Naive thymus-derived CD4-positive, alpha-beta T cell (primary cell): ENCODE measurements at regions of chr7 and their contacts with region 1.

Region 1: GRCh38 chr7:144786522-144786921 is 49.3 kb downstream of the TPK1 start:
- DNase-seq: peak in 1 of 9 donors; percentile 15
- ATAC-seq: peak; percentile 50
- H3K4me3 ChIP-seq: no peak overlapping the region
- H3K4me3 Mint-ChIP-seq: no peak overlapping the region
- H3K27ac ChIP-seq: no peak overlapping the region
- H3K27ac Mint-ChIP-seq: peak overlapping the region in 3 of 9 donors; percentile 12 to 40 (median 28)
- H3K4me1 ChIP-seq: no peaks in the 10 kb centered on the region
- H3K4me1 Mint-ChIP-seq: peaks cover 6 to 42% (median 24%) of the 10 kb centered on the region in 7 donors
- H3K27me3 ChIP-seq: no peaks in the 10 kb centered on the region
- H3K27me3 Mint-ChIP-seq: no peaks in the 10 kb centered on the region

Region 2: DNA sequence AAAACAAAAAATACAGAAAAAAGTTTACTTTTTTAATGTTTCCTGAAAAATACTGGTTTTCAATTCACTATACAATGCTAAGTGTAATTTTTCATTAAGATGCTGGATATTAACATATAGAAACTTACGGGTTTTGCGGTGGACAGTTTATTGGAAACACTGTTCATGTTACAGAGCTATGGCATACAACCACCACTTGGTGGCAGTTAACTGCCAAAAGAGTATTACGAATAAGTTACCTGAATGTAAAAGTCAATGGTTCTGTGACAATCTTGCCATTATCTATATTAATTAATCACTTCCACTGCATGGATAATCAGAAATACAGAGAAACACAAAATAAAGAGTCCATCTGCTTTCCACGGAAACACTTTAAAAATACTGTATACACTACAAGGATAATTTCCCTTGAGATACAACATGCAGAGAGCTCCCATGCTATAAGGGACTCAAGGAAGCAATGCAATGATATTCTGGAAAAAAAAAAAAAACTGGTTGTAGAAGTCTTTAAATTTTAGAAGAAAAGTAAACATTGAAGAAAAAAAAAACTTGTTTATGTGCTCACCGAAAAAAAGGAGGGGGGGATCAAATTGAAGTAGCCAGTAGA is 47.7 kb before region 1 on chr7:
- CTCF ChIA-PET with region 1: interaction called, 3 read pairs
- POLR2A ChIA-PET with region 1: no interaction called
- intact Hi-C with region 1: loop called (anchors 1 to 2 kb)
- DNase-seq: peak in 7 of 9 donors; percentile 9 to 55 (median 43)
- ATAC-seq: peak; percentile 67
- H3K4me3 ChIP-seq: no peak overlapping the region
- H3K4me3 Mint-ChIP-seq: no peak overlapping the region
- H3K27ac ChIP-seq: no peak overlapping the region
- H3K27ac Mint-ChIP-seq: no peak overlapping the region
- H3K4me1 ChIP-seq: no peaks in the 10 kb centered on the region
- H3K4me1 Mint-ChIP-seq: peaks cover 0 to 15% (median 11%) of the 10 kb centered on the region in 7 donors
- H3K27me3 ChIP-seq: no peaks in the 10 kb centered on the region
- H3K27me3 Mint-ChIP-seq: no peaks in the 10 kb centered on the region

Region 3: DNA sequence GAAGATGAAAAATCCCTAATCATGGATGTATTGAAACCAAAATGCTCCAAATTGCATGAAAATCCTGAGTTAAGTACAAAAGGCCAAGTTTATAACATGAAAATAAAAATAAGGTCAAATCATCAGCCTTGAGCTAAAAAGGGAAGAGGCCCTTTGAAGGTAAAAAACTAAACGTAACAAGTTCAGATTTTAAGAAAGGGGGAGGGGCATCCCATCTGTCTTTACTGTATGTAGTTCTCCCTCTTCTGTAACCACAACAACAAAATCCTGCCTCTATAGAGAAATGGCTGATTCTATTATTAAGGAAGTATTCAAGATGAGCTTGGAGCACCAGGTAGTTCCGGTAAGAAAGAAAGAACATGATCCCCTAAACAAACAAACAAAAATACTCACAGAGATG is 15.3 kb before region 1 on chr7:
- CTCF ChIA-PET with region 1: no interaction called
- POLR2A ChIA-PET with region 1: interaction called, 3 read pairs
- intact Hi-C with region 1: loop called in 1 of 2 experiments (anchors 1 kb)
- DNase-seq: no peak
- ATAC-seq: no peak
- H3K4me3 ChIP-seq: no peak overlapping the region
- H3K4me3 Mint-ChIP-seq: peak overlapping the region in 2 of 10 donors; percentile 8 to 20
- H3K27ac ChIP-seq: no peak overlapping the region
- H3K27ac Mint-ChIP-seq: peak overlapping the region in 1 of 9 donors; percentile 12
- H3K4me1 ChIP-seq: peaks cover 0 to 11% of the 10 kb centered on the region in 2 donors
- H3K4me1 Mint-ChIP-seq: peaks cover 4 to 65% (median 35%) of the 10 kb centered on the region in 7 donors
- H3K27me3 ChIP-seq: no peaks in the 10 kb centered on the region
- H3K27me3 Mint-ChIP-seq: no peaks in the 10 kb centered on the region

Region 4: GRCh38 chr7:144805627-144806239 is 19.2 kb after region 1 on chr7:
- CTCF ChIA-PET with region 1: interaction called, 15 read pairs
- POLR2A ChIA-PET with region 1: interaction called, 3 read pairs
- intact Hi-C with region 1: loop called in 1 of 2 experiments (anchors 2 kb)
- DNase-seq: no peak
- ATAC-seq: no peak
- H3K4me3 ChIP-seq: no peak overlapping the region
- H3K4me3 Mint-ChIP-seq: no peak overlapping the region
- H3K27ac ChIP-seq: no peak overlapping the region
- H3K27ac Mint-ChIP-seq: peak overlapping the region in 2 of 9 donors; percentile 12 to 21
- H3K4me1 ChIP-seq: peaks cover 0 to 23% of the 10 kb centered on the region in 2 donors
- H3K4me1 Mint-ChIP-seq: peaks cover 12 to 85% (median 75%) of the 10 kb centered on the region in 7 donors
- H3K27me3 ChIP-seq: no peaks in the 10 kb centered on the region
- H3K27me3 Mint-ChIP-seq: no peaks in the 10 kb centered on the region

Region 5: GRCh38 chr7:144818511-144818910 is 32.0 kb after region 1 on chr7:
- CTCF ChIA-PET with region 1: interaction called, 3 read pairs
- POLR2A ChIA-PET with region 1: interaction called, 4 read pairs
- intact Hi-C with region 1: loop called in 1 of 2 experiments (anchors 5 kb)
- DNase-seq: peak in 7 of 9 donors; percentile 64 to 83 (median 76)
- ATAC-seq: peak; percentile 97
- H3K4me3 ChIP-seq: no peak overlapping the region
- H3K4me3 Mint-ChIP-seq: peak overlapping the region; percentile 62 to 84 (median 72)
- H3K27ac ChIP-seq: peak overlapping the region; percentile 73
- H3K27ac Mint-ChIP-seq: peak overlapping the region; percentile 87 to 97 (median 93)
- H3K4me1 ChIP-seq: peaks cover 37 to 56% of the 10 kb centered on the region in 2 donors
- H3K4me1 Mint-ChIP-seq: peaks cover 35 to 95% (median 89%) of the 10 kb centered on the region in 7 donors
- H3K27me3 ChIP-seq: no peaks in the 10 kb centered on the region
- H3K27me3 Mint-ChIP-seq: no peaks in the 10 kb centered on the region